ENCODE measurements at regions of chr17 and their contacts with region 1.

Region 1: DNA sequence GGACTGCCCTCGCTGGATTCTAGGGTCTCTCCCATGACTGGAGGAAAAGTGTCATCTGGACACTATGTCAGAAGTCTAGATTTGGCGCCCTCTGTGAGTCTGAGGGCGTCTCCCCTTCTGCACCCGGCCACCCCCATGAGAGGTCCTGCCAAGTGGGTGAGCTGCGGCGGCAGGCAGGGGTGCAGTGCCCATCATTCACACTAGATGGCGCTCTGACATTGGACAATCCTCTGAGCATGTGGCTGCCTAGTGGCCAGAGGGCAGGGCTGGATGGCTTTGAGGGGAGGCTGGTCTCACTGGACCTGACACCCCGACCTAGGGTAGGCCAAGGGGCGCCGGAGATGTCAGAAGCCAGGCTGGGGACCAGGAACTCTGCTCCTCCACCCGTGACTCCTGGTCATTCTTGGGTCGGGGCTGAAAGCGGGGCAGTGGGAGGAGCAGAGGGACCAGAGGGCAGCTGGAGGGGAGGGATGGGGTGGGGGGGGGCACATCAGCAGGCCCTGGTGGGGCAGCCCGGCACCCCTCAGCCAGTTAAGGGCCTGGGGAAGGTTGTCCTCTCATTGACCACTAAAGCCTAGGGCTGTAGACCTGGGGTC is 28.0 kb downstream of the MRM1 start:
- DNase-seq: peak; percentile 85

Region 2: GRCh38 chr17:37047631-37048104 is 418.3 kb after region 1 on chr17:
- intact Hi-C with region 1: loop called (anchors 2 kb)
- DNase-seq: peak; percentile 84

Region 3: DNA sequence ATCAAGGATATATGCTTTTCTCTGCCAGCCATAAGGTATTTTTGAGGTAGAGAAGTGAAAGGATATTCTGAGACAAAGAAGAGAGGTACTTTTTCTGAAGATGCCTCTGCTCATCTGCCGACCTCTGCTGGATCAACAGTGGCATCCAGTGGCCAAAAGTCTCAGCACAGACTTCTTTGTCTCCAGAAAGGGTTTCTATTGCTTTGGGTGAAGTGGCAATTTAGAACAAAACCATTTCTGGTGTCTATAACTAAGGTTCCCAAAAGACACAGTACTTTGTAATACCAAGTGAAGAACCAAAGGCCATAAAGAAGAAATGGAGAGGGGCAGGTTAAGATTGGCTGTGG is 591.2 kb after region 1 on chr17:
- intact Hi-C with region 1: loop called (anchors 2 kb)
- DNase-seq: no peak

Measured in cardiac septum (tissue), 1 donor.